ENCODE measurements at regions of chr14 and their contacts with region 1.

Region 1: GRCh38 chr14:68248481-68249255 is 429.1 kb downstream of the RAD51B start:
- DNase-seq: no peak
- ATAC-seq: peak; percentile 73 to 85
- H3K4me3 ChIP-seq: no peak overlapping the region
- H3K27ac ChIP-seq: peak overlapping the region; percentile 4
- H3K4me1 ChIP-seq: peaks cover 70% of the 10 kb centered on the region
- H3K27me3 ChIP-seq: no peaks in the 10 kb centered on the region
- CTCF ChIP-seq: peak; percentile 57

Region 2: GRCh38 chr14:67943947-67944346 is 304.7 kb before region 1 on chr14:
- intact Hi-C with region 1: loop called (anchors 10 kb)
- DNase-seq: peak; percentile 59
- ATAC-seq: peak; percentile 81 to 87
- H3K4me3 ChIP-seq: no peak overlapping the region
- H3K27ac ChIP-seq: no peak overlapping the region
- H3K4me1 ChIP-seq: peaks cover 44% of the 10 kb centered on the region
- H3K27me3 ChIP-seq: no peaks in the 10 kb centered on the region
- CTCF ChIP-seq: peak; percentile 71

Region 3: GRCh38 chr14:68795597-68796417 is 547.1 kb after region 1 on chr14:
- intact Hi-C with region 1: loop called (anchors 10 kb)
- DNase-seq: peak; percentile 88
- ATAC-seq: peak; percentile 70 to 76
- H3K4me3 ChIP-seq: peak overlapping the region; percentile 86
- H3K27ac ChIP-seq: peak overlapping the region; percentile 100
- H3K4me1 ChIP-seq: peaks cover 15% of the 10 kb centered on the region
- H3K27me3 ChIP-seq: no peaks in the 10 kb centered on the region
- CTCF ChIP-seq: peak; percentile 88

Measured in lower lobe of right lung (tissue), 2 donors.